K562 (cell line): ENCODE measurements at regions of chr5 and their contacts with region 1.

Region 1: GRCh38 chr5:42005561-42006153 is 80.6 kb downstream of the FBXO4 start:
- DNase-seq: peak; percentile 20 to 53 (median 47)
- ATAC-seq: peak; percentile 81
- H3K4me3 ChIP-seq: no peak overlapping the region
- H3K27ac ChIP-seq: no peak overlapping the region
- H3K4me1 ChIP-seq: no peaks in the 10 kb centered on the region
- H3K27me3 ChIP-seq: no peaks in the 10 kb centered on the region; a peak in 1 of 5 replicates
- CTCF ChIP-seq: peak; percentile 35 to 70 (median 61); a peak in 5 of 6 replicates
- EP300 ChIP-seq: no peak
- POLR2A ChIP-seq: no peak
- RAD21 ChIP-seq: peak; percentile 10 to 45; a peak in 2 of 4 replicates

Region 2: GRCh38 chr5:42064821-42065220 is 59.2 kb after region 1 on chr5:
- CTCF ChIA-PET with region 1: no interaction called
- POLR2A ChIA-PET with region 1: no interaction called
- in situ Hi-C with region 1: loop called (anchors 5 kb)
- intact Hi-C with region 1: no loop called
- DNase-seq: no peak
- ATAC-seq: no peak
- H3K4me3 ChIP-seq: no peak overlapping the region
- H3K27ac ChIP-seq: no peak overlapping the region
- H3K4me1 ChIP-seq: no peaks in the 10 kb centered on the region
- H3K27me3 ChIP-seq: 0 out of 5 replicates have a peak, but pooled peaks cover 0 to 8% of the 10 kb centered on the region in 2 experiments
- CTCF ChIP-seq: no peak
- EP300 ChIP-seq: no peak
- POLR2A ChIP-seq: no peak
- RAD21 ChIP-seq: no peak